Sigmoid colon (tissue), 7 donors: ENCODE measurements at regions of chr7 and their contacts with region 1.

Region 1: GRCh38 chr7:67371429-67372305 is 375.0 kb downstream of the TYW1 start:
- DNase-seq: peak; percentile 70
- H3K4me3 ChIP-seq: no peak overlapping the region
- H3K27ac ChIP-seq: no peak overlapping the region
- H3K4me1 ChIP-seq: no peaks in the 10 kb centered on the region
- H3K27me3 ChIP-seq: peaks cover 0 to 25% (median 8%) of the 10 kb centered on the region in 3 donors
- CTCF ChIP-seq: peak; percentile 37 to 82 (median 65)
- EP300 ChIP-seq: no peak
- POLR2A ChIP-seq: no peak

Region 2: GRCh38 chr7:66950763-66951162 is 420.9 kb before region 1 on chr7:
- intact Hi-C with region 1: no loop called
- DNase-seq: no peak
- H3K4me3 ChIP-seq: no peak overlapping the region
- H3K27ac ChIP-seq: no peak overlapping the region
- H3K4me1 ChIP-seq: no peaks in the 10 kb centered on the region
- H3K27me3 ChIP-seq: no peaks in the 10 kb centered on the region
- CTCF ChIP-seq: no peak
- EP300 ChIP-seq: no peak
- POLR2A ChIP-seq: no peak

Region 3: GRCh38 chr7:67359900-67360299 is 11.8 kb before region 1 on chr7:
- intact Hi-C with region 1: no loop called
- DNase-seq: no peak
- H3K4me3 ChIP-seq: no peak overlapping the region
- H3K27ac ChIP-seq: no peak overlapping the region
- H3K4me1 ChIP-seq: no peaks in the 10 kb centered on the region
- H3K27me3 ChIP-seq: no peaks in the 10 kb centered on the region
- CTCF ChIP-seq: no peak
- EP300 ChIP-seq: no peak
- POLR2A ChIP-seq: no peak

Region 4: GRCh38 chr7:67484244-67484751 is 112.6 kb after region 1 on chr7:
- intact Hi-C with region 1: loop called (anchors 10 kb)
- DNase-seq: peak; percentile 68
- H3K4me3 ChIP-seq: peak overlapping the region in 3 of 4 donors; percentile 6 to 37 (median 32)
- H3K27ac ChIP-seq: no peak overlapping the region
- H3K4me1 ChIP-seq: peaks cover 0 to 32% (median 15%) of the 10 kb centered on the region in 4 donors
- H3K27me3 ChIP-seq: no peaks in the 10 kb centered on the region
- CTCF ChIP-seq: peak in 3 of 4 experiments; percentile 55 to 72 (median 67)
- EP300 ChIP-seq: no peak
- POLR2A ChIP-seq: no peak